Aorta (tissue), 5 donors: ENCODE measurements at regions of chr1 and their contacts with region 1.

Region 1: GRCh38 chr1:3069491-3070303 is 694 bp downstream of the PRDM16 start:
- DNase-seq: peak; percentile 64 to 80
- ATAC-seq: peak; percentile 40
- H3K4me3 ChIP-seq: peak overlapping the region; percentile 90 to 94
- H3K27ac ChIP-seq: peak overlapping the region; percentile 96 to 98
- H3K4me1 ChIP-seq: no peaks in the 10 kb centered on the region
- H3K27me3 ChIP-seq: no peaks in the 10 kb centered on the region

Region 2: DNA sequence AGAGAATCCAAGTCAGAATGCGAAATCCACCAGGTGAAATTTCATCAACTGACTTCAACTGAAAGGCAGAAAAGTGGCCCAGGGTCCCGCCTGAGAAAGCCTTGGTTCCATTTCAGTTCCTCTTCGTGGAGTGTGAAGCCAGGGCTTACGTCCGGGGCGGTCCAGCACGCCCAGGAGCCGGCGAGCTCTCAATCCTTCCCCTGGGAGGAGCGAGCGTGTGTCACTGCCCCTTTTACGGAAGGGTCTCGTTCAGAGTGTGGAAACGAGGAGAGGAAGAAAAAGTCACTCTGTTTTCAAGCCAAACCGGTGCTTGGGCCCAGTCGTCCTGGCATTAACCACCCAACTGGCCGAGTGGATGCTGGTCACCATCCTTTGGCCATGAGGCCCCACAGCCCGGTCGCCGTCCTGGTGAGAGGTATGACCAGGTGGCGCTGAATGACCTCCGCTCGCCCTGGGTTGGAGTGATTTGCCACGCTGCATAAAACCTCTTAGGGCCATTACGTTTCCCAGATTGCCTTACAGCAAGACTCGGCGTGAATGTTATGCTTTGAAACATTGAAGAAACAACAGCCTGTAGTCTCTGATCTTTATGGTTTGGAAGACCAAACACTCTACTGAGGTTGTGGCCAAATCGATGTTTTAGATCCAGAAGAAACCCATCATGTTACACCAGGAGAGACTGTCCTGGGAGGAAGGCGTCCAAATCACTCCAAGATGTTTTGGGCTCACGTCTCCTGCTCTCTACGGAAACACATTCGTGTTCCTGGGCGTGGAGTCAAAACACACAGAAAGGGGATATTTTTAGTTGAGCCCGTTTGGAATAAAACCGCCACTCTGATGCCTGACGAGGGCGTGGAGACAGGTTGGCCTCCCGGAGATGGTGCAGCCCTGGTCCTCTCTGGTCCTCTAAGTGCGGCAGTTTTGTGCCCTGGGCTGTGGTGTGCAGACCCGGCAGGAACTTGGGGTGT is 142.0 kb before region 1 on chr1:
- intact Hi-C with region 1: loop called in 1 of 2 experiments (anchors 5 kb)
- DNase-seq: peak; percentile 69 to 89
- ATAC-seq: peak; percentile 67
- H3K4me3 ChIP-seq: no peak overlapping the region
- H3K27ac ChIP-seq: peak overlapping the region; percentile 37 to 87
- H3K4me1 ChIP-seq: no peaks in the 10 kb centered on the region
- H3K27me3 ChIP-seq: no peaks in the 10 kb centered on the region

Region 3: DNA sequence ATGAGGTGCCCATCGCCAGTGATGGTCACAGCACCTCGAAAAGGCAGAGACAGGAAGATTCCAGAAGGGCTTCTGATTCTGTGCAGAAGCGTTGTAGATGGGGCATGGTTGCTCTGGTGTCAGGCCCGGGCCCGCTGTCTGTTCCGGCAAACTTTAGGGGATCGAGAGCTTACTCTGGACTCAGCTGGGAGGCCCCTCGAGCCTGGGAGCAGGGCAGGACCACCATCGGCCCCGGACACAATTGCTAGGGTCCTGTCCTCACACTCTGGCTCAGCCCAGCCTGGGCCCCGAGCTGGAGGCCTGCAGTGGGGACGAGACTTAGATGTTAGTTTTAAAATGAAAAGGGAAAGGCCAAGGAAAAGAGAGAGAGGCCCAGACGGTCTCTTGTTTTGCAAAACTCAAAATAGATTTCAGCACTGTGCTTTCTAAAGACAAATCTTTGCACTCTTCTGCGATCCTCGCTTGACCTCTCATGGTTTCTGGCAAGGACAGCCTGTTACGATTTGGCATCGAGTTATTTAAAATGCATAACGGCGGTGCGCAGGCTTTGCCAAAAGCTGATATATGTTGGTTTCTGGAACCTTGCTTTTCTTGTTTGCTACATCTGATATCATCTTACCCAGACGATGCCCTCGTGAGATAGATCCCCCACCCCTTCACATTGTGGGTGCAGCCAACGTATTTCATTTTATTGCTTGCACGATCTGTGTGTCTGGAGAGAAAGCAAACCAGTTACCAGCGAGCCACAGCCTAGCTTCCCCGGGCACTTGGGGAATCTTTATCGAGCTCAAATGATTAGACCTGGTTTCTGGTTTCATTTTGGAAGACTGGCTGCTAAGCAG is 57.3 kb after region 1 on chr1:
- intact Hi-C with region 1: loop called in 1 of 2 experiments (anchors 2 kb)
- DNase-seq: no peak
- ATAC-seq: peak; percentile 46
- H3K4me3 ChIP-seq: no peak overlapping the region
- H3K27ac ChIP-seq: peak overlapping the region; percentile 91 to 98
- H3K4me1 ChIP-seq: no peaks in the 10 kb centered on the region
- H3K27me3 ChIP-seq: no peaks in the 10 kb centered on the region

Region 4: GRCh38 chr1:3219005-3219790 is 149.5 kb after region 1 on chr1:
- intact Hi-C with region 1: no loop called
- DNase-seq: peak; percentile 86 to 93
- ATAC-seq: peak; percentile 39
- H3K4me3 ChIP-seq: no peak overlapping the region
- H3K27ac ChIP-seq: peak overlapping the region in 1 of 2 donors; percentile 64
- H3K4me1 ChIP-seq: no peaks in the 10 kb centered on the region
- H3K27me3 ChIP-seq: no peaks in the 10 kb centered on the region

Region 5: DNA sequence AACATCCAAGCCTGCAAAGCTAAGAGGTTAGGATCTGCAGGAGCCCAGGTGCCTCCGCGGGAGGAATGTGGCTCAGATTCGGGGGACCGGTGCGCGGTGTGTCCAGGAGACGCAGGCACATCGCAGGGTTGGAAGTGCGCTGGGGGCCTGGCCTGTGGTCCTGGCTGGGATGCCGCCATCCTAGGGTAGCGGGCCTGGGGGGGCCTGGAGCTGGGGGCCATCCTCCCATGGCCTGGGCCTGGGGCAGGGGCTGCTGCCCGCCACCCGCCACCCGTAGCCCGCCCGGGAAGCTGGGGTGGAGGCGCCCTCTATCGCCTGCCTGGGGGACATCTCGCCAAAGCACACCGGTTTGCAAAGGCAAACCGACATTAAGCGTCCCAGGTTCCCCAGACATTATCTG is 214.2 kb after region 1 on chr1:
- intact Hi-C with region 1: loop called (anchors 2 to 5 kb)
- DNase-seq: peak in 1 of 2 donors; percentile 88
- ATAC-seq: peak; percentile 61
- H3K4me3 ChIP-seq: no peak overlapping the region
- H3K27ac ChIP-seq: peak overlapping the region in 1 of 2 donors; percentile 19
- H3K4me1 ChIP-seq: no peaks in the 10 kb centered on the region
- H3K27me3 ChIP-seq: no peaks in the 10 kb centered on the region

Region 6: GRCh38 chr1:3352299-3352951 is 282.7 kb after region 1 on chr1:
- intact Hi-C with region 1: loop called in 1 of 2 experiments (anchors 2 kb)
- DNase-seq: peak; percentile 80 to 89
- ATAC-seq: peak; percentile 65
- H3K4me3 ChIP-seq: no peak overlapping the region
- H3K27ac ChIP-seq: peak overlapping the region; percentile 93 to 100
- H3K4me1 ChIP-seq: peaks cover 2 to 3% of the 10 kb centered on the region in 2 donors
- H3K27me3 ChIP-seq: no peaks in the 10 kb centered on the region